Heart left ventricle (tissue), 16 donors: ENCODE measurements at regions of chr13 and their contacts with region 1.

Region 1: GRCh38 chr13:39273953-39274738 is 235.9 kb downstream of the NHLRC3 start:
- DNase-seq: no peak
- ATAC-seq: peak in 2 of 4 donors; percentile 24 to 50
- H3K4me3 ChIP-seq: no peak overlapping the region
- H3K27ac ChIP-seq: no peak overlapping the region
- H3K4me1 ChIP-seq: peaks cover 0 to 22% (median 12%) of the 10 kb centered on the region in 12 donors
- H3K27me3 ChIP-seq: no peaks in the 10 kb centered on the region
- CTCF ChIP-seq: peak in 10 of 12 donors; percentile 5 to 44 (median 19)
- POLR2A ChIP-seq: no peak

Region 2: DNA sequence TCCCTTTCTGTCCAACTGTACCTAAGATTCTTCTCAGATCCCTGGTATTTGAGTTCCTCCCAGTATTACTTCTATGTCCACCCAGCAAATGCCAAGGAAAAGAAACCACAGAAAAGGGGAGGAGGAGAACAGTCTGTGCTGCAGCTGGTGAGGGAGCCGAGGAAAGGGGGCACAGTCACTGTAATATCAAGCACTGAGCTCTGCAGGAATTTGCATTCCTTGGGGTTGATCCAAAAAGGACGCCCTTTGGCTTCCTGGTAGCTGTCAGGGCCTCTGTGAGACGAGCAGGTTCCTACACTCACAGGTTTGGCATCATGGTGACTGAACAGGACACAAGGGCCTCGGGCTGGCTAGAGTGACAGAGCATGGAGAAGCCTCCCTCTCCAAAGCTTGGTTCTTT is 37.5 kb after region 1 on chr13:
- intact Hi-C with region 1: loop called in 1 of 10 experiments (anchors 5 kb)
- DNase-seq: peak in 4 of 5 donors; percentile 24 to 49 (median 36)
- ATAC-seq: peak; percentile 81 to 93 (median 88)
- H3K4me3 ChIP-seq: no peak overlapping the region
- H3K27ac ChIP-seq: peak overlapping the region in 2 of 12 donors; percentile 12 to 30
- H3K4me1 ChIP-seq: peaks cover 0 to 25% (median 12%) of the 10 kb centered on the region in 12 donors
- H3K27me3 ChIP-seq: no peaks in the 10 kb centered on the region
- CTCF ChIP-seq: no peak
- POLR2A ChIP-seq: no peak

Region 3: GRCh38 chr13:39326469-39327171 is 52.5 kb after region 1 on chr13:
- intact Hi-C with region 1: loop called in 1 of 10 experiments (anchors 5 kb)
- DNase-seq: peak in 1 of 5 donors; percentile 27
- ATAC-seq: no peak
- H3K4me3 ChIP-seq: no peak overlapping the region
- H3K27ac ChIP-seq: peak overlapping the region in 7 of 12 donors; percentile 6 to 48 (median 35)
- H3K4me1 ChIP-seq: peaks cover 0 to 44% (median 17%) of the 10 kb centered on the region in 12 donors
- H3K27me3 ChIP-seq: no peaks in the 10 kb centered on the region
- CTCF ChIP-seq: no peak
- POLR2A ChIP-seq: no peak

Region 4: DNA sequence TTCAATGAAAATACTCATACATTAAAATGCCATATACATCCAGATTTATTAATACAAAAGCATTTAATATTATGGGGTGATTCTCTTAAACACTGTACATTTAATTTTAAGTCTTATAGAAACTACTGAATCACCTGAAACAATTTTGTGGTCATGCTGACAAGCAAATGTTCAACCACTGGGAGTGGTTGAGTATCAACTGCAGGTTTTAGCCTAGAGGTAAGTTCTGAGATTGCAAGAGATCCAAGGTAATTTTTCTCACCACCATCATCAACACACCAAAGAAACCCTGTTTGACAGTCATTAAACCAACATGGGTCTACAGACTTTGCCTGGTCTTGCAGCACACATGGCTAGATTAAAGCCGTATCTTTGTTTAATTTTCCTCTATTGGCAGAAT is 132.5 kb after region 1 on chr13:
- intact Hi-C with region 1: loop called in 5 of 10 experiments (anchors 5 to 10 kb)
- DNase-seq: no peak
- ATAC-seq: no peak
- H3K4me3 ChIP-seq: no peak overlapping the region
- H3K27ac ChIP-seq: no peak overlapping the region
- H3K4me1 ChIP-seq: peaks cover 0 to 84% (median 57%) of the 10 kb centered on the region in 12 donors
- H3K27me3 ChIP-seq: no peaks in the 10 kb centered on the region
- CTCF ChIP-seq: no peak
- POLR2A ChIP-seq: no peak

Region 5: GRCh38 chr13:39577838-39578491 is 303.8 kb after region 1 on chr13:
- intact Hi-C with region 1: no loop called
- DNase-seq: peak in 4 of 5 donors; percentile 56 to 78 (median 66)
- ATAC-seq: peak; percentile 36 to 56 (median 44)
- H3K4me3 ChIP-seq: no peak overlapping the region
- H3K27ac ChIP-seq: peak overlapping the region in 11 of 12 donors; percentile 20 to 72 (median 46)
- H3K4me1 ChIP-seq: peaks cover 11 to 81% (median 57%) of the 10 kb centered on the region in 12 donors
- H3K27me3 ChIP-seq: no peaks in the 10 kb centered on the region
- CTCF ChIP-seq: no peak
- POLR2A ChIP-seq: no peak